Activated T-helper 1 cell treated with anti-CD3 and anti-CD28 coated beads, Interleukin-12 subunit alpha, Interleukin-12 subunit beta, Interleukin-2, Interleukin-4 antibody, amounts not matched to agents 30 ng/mL and 10 ng/mL and 1 ng/mL, durations not matched to agents 14 hours and 24 hours and 36 hours (primary cell): ENCODE measurements at regions of chr2 and their contacts with region 1.

Region 1: DNA sequence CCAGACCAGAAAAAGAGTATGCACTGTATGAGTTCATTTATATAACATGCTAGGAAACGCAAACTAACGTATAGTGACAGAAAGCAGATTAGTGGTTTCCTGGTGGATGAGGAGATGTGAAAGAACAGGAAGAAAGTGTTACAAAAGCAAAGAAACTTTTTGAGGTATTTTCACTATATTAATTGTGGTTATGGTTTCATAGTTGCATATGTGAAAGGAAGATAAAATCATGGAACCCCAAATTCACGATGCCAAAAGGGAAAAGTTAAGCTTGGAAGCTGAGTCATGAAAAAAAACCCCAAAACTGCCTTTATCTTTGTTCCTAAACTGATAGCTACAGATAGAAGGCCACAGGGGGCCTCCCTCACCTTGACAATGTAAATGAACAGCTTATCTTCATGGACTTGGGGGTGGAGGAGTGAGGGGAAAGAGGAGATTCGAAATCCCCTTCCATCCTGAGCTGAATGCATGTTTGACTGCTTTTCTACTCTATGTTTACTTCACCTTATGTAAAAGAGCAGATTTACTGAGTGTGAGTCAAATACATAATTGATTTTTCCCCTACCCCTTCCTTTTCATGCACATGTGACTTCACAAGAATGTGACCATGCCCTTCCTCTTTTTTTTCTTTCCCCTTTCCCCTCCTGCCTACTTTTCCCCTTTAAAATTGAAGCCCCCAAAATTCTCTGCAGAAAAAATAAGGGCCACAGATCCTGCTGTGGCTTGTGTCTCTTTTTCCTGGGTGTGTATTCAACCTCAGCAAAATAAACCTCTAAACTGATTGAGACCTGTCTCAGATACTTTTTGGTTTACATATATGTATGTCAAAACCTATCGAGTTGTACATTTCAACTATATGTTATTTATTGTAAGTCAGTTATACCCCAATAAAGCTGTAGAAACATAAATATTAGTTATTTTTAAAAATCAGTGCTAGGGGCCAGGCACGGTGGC is 100.1 kb upstream of the TLK1 start:
- DNase-seq: no peak
- H3K4me3 Mint-ChIP-seq: no peak overlapping the region
- H3K27ac Mint-ChIP-seq: peak overlapping the region; percentile 83
- H3K4me1 Mint-ChIP-seq: peaks cover 31% of the 10 kb centered on the region
- H3K27me3 Mint-ChIP-seq: no peaks in the 10 kb centered on the region

Region 2: GRCh38 chr2:171086352-171087290 is 174.1 kb before region 1 on chr2:
- intact Hi-C with region 1: loop called (anchors 5 kb)
- DNase-seq: peak; percentile 23
- H3K4me3 Mint-ChIP-seq: peak overlapping the region; percentile 77
- H3K27ac Mint-ChIP-seq: peak overlapping the region; percentile 82
- H3K4me1 Mint-ChIP-seq: peaks cover 52% of the 10 kb centered on the region
- H3K27me3 Mint-ChIP-seq: no peaks in the 10 kb centered on the region

Region 3: GRCh38 chr2:171210864-171211431 is 49.8 kb before region 1 on chr2:
- intact Hi-C with region 1: loop called (anchors 5 kb)
- DNase-seq: peak; percentile 31
- H3K4me3 Mint-ChIP-seq: peak overlapping the region; percentile 48
- H3K27ac Mint-ChIP-seq: peak overlapping the region; percentile 35
- H3K4me1 Mint-ChIP-seq: peaks cover 11% of the 10 kb centered on the region
- H3K27me3 Mint-ChIP-seq: peaks cover 2% of the 10 kb centered on the region

Region 4: GRCh38 chr2:171325886-171326585 is 65.3 kb after region 1 on chr2:
- intact Hi-C with region 1: loop called (anchors 1 kb)
- DNase-seq: no peak
- H3K4me3 Mint-ChIP-seq: peak overlapping the region; percentile 64
- H3K27ac Mint-ChIP-seq: peak overlapping the region; percentile 91
- H3K4me1 Mint-ChIP-seq: peaks cover 48% of the 10 kb centered on the region
- H3K27me3 Mint-ChIP-seq: no peaks in the 10 kb centered on the region